ENCODE measurements at regions of chr1 and their contacts with region 1.

Region 1: DNA sequence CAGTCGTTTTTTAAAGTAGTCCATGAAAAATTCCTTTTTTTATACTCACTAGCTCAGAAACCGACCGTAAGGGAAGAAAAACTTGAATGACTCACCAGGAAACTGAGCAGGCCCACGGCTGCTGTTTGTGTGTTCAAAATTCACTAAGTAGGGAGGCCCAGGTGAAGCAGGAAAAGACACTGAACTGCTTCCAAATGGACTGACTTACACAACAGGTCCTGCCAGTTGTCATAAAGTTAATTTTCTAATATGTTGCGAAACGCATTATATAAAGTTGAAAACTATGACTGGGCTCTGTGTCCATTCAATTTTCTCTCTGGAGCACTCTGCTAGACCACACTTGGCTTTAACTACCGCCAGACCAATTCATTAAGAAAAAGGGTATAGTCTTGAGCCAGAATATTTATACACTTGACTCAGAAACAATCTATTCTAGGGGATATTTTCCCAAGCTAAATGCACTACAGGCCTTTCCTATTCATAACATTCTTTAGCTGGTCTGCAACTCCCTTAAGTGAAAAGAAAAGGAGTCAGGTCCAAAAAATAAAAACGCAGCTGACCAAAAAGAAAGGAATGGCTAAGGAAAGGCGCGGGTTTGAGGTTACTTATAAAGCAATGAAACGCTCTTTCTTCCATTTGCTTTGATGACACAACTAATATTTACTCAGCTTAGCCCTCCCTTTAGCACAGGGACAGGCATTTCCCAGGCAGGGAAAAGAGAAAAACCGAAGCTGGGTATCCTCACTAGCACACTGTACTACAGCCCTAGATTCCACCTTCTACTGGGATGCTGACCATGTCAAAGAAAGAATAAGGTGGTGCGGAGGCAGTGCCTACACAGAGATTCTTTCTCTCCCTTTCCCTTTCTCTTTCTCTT is 306.3 kb upstream of the ESRRG start:
- DNase-seq: peak; percentile 77
- H3K4me3 Mint-ChIP-seq: peak overlapping the region; percentile 2
- H3K27ac Mint-ChIP-seq: peak overlapping the region; percentile 48
- H3K4me1 Mint-ChIP-seq: peaks cover 46% of the 10 kb centered on the region
- H3K27me3 Mint-ChIP-seq: no peaks in the 10 kb centered on the region
- CTCF ChIP-seq: no peak

Region 2: GRCh38 chr1:216778737-216779136 is 250.8 kb before region 1 on chr1:
- CTCF ChIA-PET with region 1: no interaction called
- intact Hi-C with region 1: no loop called
- DNase-seq: no peak
- H3K4me3 Mint-ChIP-seq: no peak overlapping the region
- H3K27ac Mint-ChIP-seq: no peak overlapping the region
- H3K4me1 Mint-ChIP-seq: no peaks in the 10 kb centered on the region
- H3K27me3 Mint-ChIP-seq: no peaks in the 10 kb centered on the region
- CTCF ChIP-seq: no peak

Region 3: GRCh38 chr1:216902669-216903381 is 126.7 kb before region 1 on chr1:
- CTCF ChIA-PET with region 1: no interaction called
- intact Hi-C with region 1: loop called (anchors 5 kb)
- DNase-seq: peak; percentile 50
- H3K4me3 Mint-ChIP-seq: peak overlapping the region; percentile 9
- H3K27ac Mint-ChIP-seq: peak overlapping the region; percentile 14
- H3K4me1 Mint-ChIP-seq: peaks cover 31% of the 10 kb centered on the region
- H3K27me3 Mint-ChIP-seq: no peaks in the 10 kb centered on the region
- CTCF ChIP-seq: no peak

Region 4: GRCh38 chr1:217009376-217009775 is 20.1 kb before region 1 on chr1:
- CTCF ChIA-PET with region 1: interaction called, 13 read pairs
- intact Hi-C with region 1: no loop called
- DNase-seq: no peak
- H3K4me3 Mint-ChIP-seq: no peak overlapping the region
- H3K27ac Mint-ChIP-seq: no peak overlapping the region
- H3K4me1 Mint-ChIP-seq: peaks cover 4% of the 10 kb centered on the region
- H3K27me3 Mint-ChIP-seq: no peaks in the 10 kb centered on the region
- CTCF ChIP-seq: no peak

Region 5: GRCh38 chr1:217089361-217090014 is 60.0 kb after region 1 on chr1:
- CTCF ChIA-PET with region 1: no interaction called
- intact Hi-C with region 1: loop called (anchors 5 kb)
- DNase-seq: peak; percentile 42
- H3K4me3 Mint-ChIP-seq: peak overlapping the region; percentile 78
- H3K27ac Mint-ChIP-seq: peak overlapping the region; percentile 6
- H3K4me1 Mint-ChIP-seq: peaks cover 21% of the 10 kb centered on the region
- H3K27me3 Mint-ChIP-seq: no peaks in the 10 kb centered on the region
- CTCF ChIP-seq: no peak

Region 6: GRCh38 chr1:217311766-217312165 is 282.2 kb after region 1 on chr1:
- CTCF ChIA-PET with region 1: no interaction called
- intact Hi-C with region 1: loop called (anchors 1 kb)
- DNase-seq: peak; percentile 13
- H3K4me3 Mint-ChIP-seq: no peak overlapping the region
- H3K27ac Mint-ChIP-seq: no peak overlapping the region
- H3K4me1 Mint-ChIP-seq: no peaks in the 10 kb centered on the region
- H3K27me3 Mint-ChIP-seq: no peaks in the 10 kb centered on the region
- CTCF ChIP-seq: no peak

Measured in Calu3 (cell line).